Endothelial cell of umbilical vein (primary cell): ENCODE measurements at regions of chr20 and their contacts with region 1.

Region 1: GRCh38 chr20:23106261-23106851 is 20.2 kb upstream of the CD93 start:
- DNase-seq: peak; percentile 93
- H3K4me3 ChIP-seq: no peak overlapping the region
- H3K27ac ChIP-seq: peak overlapping the region; percentile 70
- H3K4me1 ChIP-seq: peaks cover 52% of the 10 kb centered on the region
- H3K27me3 ChIP-seq: no peaks in the 10 kb centered on the region
- CTCF ChIP-seq: peak; percentile 27 to 39
- POLR2A ChIP-seq: peak; percentile 17

Region 2: DNA sequence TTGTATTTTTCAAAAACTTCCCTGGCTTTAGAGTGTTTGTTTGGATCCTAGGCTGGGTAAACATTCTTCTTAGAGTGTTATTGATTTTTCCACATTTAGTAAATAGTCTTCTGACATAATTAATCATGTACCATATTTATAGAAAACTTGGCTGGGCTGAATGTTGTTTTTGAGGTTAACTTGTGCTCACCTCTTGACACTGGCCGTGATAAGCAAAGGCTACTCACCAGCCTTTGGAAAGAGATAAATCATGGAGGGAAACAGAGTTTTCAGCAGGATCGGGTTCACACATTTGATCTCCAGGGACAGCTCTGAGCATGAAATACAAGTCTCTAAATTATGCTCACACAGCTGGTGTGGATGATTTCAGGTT is 14.0 kb before region 1 on chr20:
- CTCF ChIA-PET with region 1: interaction called, 10 read pairs
- POLR2A ChIA-PET with region 1: interaction called, 6 read pairs
- dilution Hi-C with region 1: no loop called
- intact Hi-C with region 1: loop called (anchors 1 kb)
- DNase-seq: peak; percentile 89
- H3K4me3 ChIP-seq: no peak overlapping the region
- H3K27ac ChIP-seq: peak overlapping the region; percentile 48
- H3K4me1 ChIP-seq: peaks cover 43% of the 10 kb centered on the region
- H3K27me3 ChIP-seq: no peaks in the 10 kb centered on the region
- CTCF ChIP-seq: no peak
- POLR2A ChIP-seq: no peak

Region 3: GRCh38 chr20:23132930-23133559 is 26.7 kb after region 1 on chr20:
- CTCF ChIA-PET with region 1: interaction called, 17 read pairs
- POLR2A ChIA-PET with region 1: no interaction called
- dilution Hi-C with region 1: no loop called
- intact Hi-C with region 1: loop called (anchors 1 kb)
- DNase-seq: peak; percentile 87
- H3K4me3 ChIP-seq: no peak overlapping the region
- H3K27ac ChIP-seq: peak overlapping the region; percentile 68
- H3K4me1 ChIP-seq: peaks cover 28% of the 10 kb centered on the region
- H3K27me3 ChIP-seq: no peaks in the 10 kb centered on the region
- CTCF ChIP-seq: no peak
- POLR2A ChIP-seq: no peak

Region 4: GRCh38 chr20:23147964-23148730 is 41.8 kb after region 1 on chr20:
- CTCF ChIA-PET with region 1: interaction called, 26 read pairs
- POLR2A ChIA-PET with region 1: interaction called, 3 read pairs
- dilution Hi-C with region 1: no loop called
- intact Hi-C with region 1: loop called (anchors 1 kb)
- DNase-seq: peak; percentile 84
- H3K4me3 ChIP-seq: no peak overlapping the region
- H3K27ac ChIP-seq: peak overlapping the region; percentile 88
- H3K4me1 ChIP-seq: peaks cover 85% of the 10 kb centered on the region
- H3K27me3 ChIP-seq: no peaks in the 10 kb centered on the region
- CTCF ChIP-seq: no peak
- POLR2A ChIP-seq: no peak

Region 5: GRCh38 chr20:23200918-23201317 is 94.6 kb after region 1 on chr20:
- CTCF ChIA-PET with region 1: interaction called, 15 read pairs
- POLR2A ChIA-PET with region 1: no interaction called
- dilution Hi-C with region 1: no loop called
- intact Hi-C with region 1: no loop called
- DNase-seq: no peak
- H3K4me3 ChIP-seq: no peak overlapping the region
- H3K27ac ChIP-seq: no peak overlapping the region
- H3K4me1 ChIP-seq: no peaks in the 10 kb centered on the region
- H3K27me3 ChIP-seq: no peaks in the 10 kb centered on the region
- CTCF ChIP-seq: peak; percentile 42 to 54
- POLR2A ChIP-seq: no peak

Region 6: DNA sequence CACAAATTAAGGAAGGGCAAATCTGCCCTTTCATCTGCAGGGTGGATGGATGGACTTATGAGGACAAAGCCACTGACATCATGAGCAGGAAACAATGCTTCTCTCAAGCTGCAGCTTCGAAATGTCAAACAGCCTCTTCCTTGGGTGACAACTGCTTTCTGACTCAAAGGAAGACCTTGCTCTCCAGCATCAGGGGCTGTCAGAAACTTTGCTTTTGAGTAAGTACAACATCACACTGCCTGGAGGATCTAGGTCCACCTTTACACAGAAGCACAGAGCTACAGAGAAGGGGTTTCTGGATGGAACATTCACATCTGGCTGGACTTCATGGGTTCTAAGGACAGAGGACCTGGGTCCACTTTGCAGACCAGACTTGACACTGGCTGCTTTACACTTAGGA is 638.5 kb after region 1 on chr20:
- CTCF ChIA-PET with region 1: no interaction called
- POLR2A ChIA-PET with region 1: no interaction called
- dilution Hi-C with region 1: no loop called
- intact Hi-C with region 1: no loop called
- DNase-seq: peak; percentile 19
- H3K4me3 ChIP-seq: no peak overlapping the region
- H3K27ac ChIP-seq: no peak overlapping the region
- H3K4me1 ChIP-seq: peaks cover 14% of the 10 kb centered on the region
- H3K27me3 ChIP-seq: no peaks in the 10 kb centered on the region
- CTCF ChIP-seq: no peak
- POLR2A ChIP-seq: no peak